ENCODE measurements at regions of chr14 and their contacts with region 1.

Region 1: DNA sequence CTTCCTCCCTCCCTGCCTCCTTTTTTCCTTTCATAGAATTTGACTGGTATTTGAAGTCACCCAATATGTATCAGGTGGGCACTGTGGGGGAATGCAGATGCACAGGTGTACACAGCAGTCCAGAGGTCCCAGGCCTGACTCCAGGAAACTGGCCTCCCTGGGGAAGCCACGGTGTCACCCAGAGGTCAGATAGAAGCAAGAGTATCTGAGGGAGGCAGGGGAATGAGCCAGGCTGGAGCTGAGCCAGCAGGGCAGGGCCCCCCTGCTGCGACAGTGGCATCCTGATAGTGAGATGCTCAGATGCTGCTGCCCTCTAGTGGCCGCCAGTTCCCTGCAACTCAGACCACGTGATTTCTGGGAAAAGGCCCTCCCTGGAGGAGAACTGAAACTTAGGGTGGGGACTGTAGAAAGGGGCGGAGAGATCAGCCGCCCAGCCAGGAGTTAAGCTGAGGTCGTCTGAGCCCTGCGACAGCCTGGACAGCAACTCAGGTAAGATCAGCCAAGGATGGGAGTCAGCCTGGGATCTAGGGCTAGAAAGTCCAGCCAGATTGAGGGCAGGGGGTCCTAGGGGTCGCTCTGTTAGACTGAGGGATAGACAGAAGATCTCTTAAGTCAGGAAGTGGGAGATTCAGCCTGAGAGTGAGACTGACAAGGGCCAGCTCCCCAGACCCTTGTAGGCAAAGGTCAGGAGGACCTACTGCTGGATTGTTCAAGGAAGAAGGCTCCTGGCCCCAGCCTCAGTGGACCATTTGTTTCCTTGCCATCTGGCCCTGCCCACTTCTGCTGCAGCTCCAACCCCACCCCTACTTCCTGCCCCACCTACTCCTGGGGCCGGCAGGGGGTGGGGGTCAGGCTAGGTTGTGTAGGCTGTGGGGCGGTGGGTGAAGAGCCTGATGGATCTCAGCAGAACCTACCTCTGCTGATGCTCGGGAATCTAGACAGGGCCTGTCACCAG is at the start of gene IRF9:
- DNase-seq: peak; percentile 92 to 98 (median 96)
- H3K4me3 ChIP-seq: peak within 1 kb of the TSS; percentile 51 to 96 (median 79)
- H3K27ac ChIP-seq: peak within 1 kb of the TSS; percentile 66 to 99 (median 95)
- H3K27me3 ChIP-seq: no peaks in the 10 kb centered on the region
- CTCF ChIP-seq: peak; percentile 86 to 99 (median 96)
- total RNA-seq, gene IRF9: 38.3 to 321 (median 79.1) TPM

Region 2: DNA sequence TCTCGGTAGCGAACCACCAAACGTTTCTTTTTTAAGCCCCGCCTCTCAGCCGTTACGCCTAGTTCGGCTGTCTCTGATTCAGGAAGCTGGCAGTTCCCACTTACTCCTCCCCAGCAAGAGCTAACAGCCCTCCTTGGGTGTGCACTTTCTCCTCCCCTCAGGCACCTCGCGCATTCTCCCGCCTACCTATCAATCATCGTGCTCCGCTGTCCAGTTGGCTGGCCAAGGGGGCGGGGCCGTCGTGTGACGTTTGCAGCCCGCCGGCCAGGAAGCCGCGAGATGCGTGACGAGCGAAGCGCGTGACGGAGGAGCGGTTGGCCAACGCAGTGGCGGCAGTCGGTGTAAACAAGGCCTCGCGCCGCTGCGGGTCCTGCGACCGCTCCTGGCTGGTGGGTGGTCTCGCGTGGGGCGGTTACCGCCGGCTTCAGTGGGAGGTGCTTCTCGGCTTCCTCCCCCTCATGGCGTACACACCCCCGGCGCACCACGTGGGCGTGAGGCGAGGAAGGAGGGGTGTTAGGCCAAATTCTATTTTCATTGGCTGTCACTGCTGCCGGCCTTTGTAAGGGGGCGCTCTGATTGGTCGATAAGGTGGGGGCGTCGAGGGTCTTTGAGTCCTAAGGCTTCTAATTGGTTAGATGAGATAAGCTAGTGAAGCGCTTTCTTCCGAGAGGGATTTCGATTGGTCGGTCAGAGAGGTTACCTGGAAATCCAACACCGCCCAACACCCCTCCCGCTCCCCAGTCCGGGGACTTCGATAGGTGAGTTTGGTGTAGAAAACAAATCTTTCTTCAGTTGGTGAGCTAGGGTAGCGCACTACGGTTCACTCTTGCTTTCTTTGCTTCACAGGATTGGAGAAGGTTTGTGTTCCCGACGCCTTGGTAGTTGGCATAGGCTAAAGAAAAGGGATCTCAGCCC is 46.3 kb before region 1 on chr14 and contains the starts of genes DCAF11 and NRL:
- intact Hi-C with region 1: loop called (anchors 5 kb)
- DNase-seq: peak; percentile 95 to 99 (median 98)
- H3K4me3 ChIP-seq: peak within 1 kb of the TSS; percentile 53 to 100 (median 85)
- H3K27ac ChIP-seq: peak within 1 kb of the TSS; percentile 93 to 100 (median 99)
- H3K27me3 ChIP-seq: no peaks in the 10 kb centered on the region
- CTCF ChIP-seq: peak in 15 of 56 donors; percentile 1 to 65 (median 17)
- total RNA-seq, gene DCAF11: 58.6 to 104 (median 77.7) TPM
- total RNA-seq, gene NRL: 1.7 to 6.4 (median 3.6) TPM

Region 3: DNA sequence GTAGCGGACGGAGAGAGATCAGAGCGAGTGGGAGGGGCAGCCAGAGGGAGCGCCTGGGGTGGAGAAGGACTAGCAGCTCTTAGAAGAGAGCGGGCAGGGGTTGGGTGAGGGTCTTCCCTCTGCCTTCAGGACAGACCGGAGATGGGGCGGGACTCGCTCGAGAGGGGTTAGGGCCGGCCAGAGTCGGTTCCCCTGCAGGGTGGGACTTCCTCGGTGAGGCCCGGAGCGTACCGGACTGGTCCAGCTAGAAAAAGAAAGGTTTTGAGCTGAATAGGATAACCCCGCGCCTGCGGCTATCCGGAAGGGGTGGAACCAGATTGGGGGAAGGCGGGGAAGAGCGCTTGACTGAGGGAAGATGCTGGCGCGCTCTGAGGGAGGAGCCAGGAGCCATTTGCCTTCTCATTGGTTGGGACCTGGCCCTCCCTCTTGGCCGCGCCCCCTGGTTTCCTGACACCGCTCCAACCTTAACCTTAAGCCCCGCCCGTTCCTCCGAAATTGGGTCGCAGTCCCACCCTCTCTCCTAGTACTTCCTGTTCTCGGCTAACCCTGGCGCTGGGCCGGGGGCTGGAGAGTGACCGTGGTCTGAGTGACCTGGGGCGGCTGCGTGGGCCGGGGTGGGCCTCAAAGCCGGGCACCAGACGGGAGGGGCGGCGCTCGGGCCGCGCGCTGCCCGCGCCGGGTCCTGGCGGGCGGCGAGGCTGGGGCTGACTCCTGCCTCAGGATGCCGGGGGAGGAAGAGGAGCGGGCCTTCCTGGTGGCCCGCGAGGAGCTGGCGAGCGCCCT is 14.0 kb before region 1 on chr14 and contains the start of gene RNF31:
- intact Hi-C with region 1: loop called in 1 of 2 experiments (anchors 2 kb)
- DNase-seq: peak; percentile 92 to 98 (median 97)
- H3K4me3 ChIP-seq: peak within 1 kb of the TSS; percentile 53 to 98 (median 92)
- H3K27ac ChIP-seq: peak within 1 kb of the TSS; percentile 68 to 99 (median 94)
- H3K27me3 ChIP-seq: no peaks in the 10 kb centered on the region
- CTCF ChIP-seq: peak in 33 of 56 donors; percentile 0 to 56 (median 33)
- total RNA-seq, gene RNF31: 30.4 to 89.6 (median 50.6) TPM